A549 (cell line): ENCODE measurements at regions of chr11 and their contacts with region 1.

Region 1: DNA sequence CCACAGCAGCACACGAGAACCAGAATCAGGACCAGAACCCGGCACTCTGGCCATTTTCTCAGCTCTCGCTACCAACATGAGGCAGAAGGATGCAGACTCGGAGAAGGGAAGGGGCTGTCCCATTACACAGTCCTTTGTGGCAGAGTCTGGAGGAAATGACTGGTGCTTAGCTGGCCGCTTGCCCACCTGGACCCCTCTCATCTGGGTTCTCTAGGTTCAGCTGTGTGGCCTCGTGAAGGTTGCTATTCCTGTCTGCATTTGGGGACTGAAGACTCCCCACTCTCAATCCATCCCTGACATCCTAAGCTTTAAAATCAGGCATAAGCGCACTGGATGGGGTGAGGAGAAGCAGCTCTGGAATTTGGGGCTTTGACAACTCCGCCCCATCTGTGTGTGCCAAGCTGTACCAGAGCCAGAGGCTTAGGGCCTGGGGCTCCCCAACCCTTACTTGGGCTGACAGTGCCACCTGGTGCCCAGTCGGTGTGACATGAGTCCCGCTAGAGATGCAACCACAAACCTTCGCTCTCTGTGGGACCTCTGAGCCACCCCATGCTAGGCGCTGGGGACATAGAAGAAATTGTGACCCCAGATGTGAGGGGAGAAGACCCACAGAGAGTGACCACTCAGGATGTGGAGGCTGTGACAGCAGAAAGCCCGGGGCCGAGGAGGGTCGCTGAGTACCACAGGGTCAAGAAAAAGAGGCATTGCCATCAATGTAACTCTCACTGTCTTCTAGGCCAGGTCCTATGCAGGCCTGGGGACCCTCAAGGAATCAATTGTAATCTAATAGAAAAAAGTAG is 35.9 kb upstream of the FCHSD2 start:
- DNase-seq: peak; percentile 70 to 91
- ATAC-seq: peak; percentile 95 to 96
- H3K4me3 ChIP-seq: no peak overlapping the region
- H3K27ac ChIP-seq: no peak overlapping the region
- H3K4me1 ChIP-seq: no peaks in the 10 kb centered on the region
- CTCF ChIP-seq: peak; percentile 84
- EP300 ChIP-seq: no peak
- POLR2A ChIP-seq: no peak
- RAD21 ChIP-seq: peak; percentile 96 to 97

Region 2: GRCh38 chr11:72683782-72684200 is 494.2 kb before region 1 on chr11:
- CTCF ChIA-PET with region 1: interaction called, 28 read pairs
- POLR2A ChIA-PET with region 1: no interaction called
- DNase-seq: peak; percentile 42 to 85
- ATAC-seq: peak; percentile 57 to 85
- H3K4me3 ChIP-seq: no peak overlapping the region
- H3K27ac ChIP-seq: no peak overlapping the region
- H3K4me1 ChIP-seq: peaks cover 9% of the 10 kb centered on the region; the same call in 2 of the 3 replicates
- CTCF ChIP-seq: peak; percentile 83
- EP300 ChIP-seq: no peak
- POLR2A ChIP-seq: no peak
- RAD21 ChIP-seq: peak; percentile 82 to 87

Region 3: GRCh38 chr11:72821883-72822799 is 355.8 kb before region 1 on chr11:
- CTCF ChIA-PET with region 1: interaction called, 339 read pairs
- POLR2A ChIA-PET with region 1: no interaction called
- DNase-seq: peak; percentile 91 to 94
- ATAC-seq: peak; percentile 70 to 91
- H3K4me3 ChIP-seq: peak overlapping the region; percentile 52
- H3K27ac ChIP-seq: peak overlapping the region; percentile 86 to 92
- H3K4me1 ChIP-seq: peaks cover 7% of the 10 kb centered on the region
- CTCF ChIP-seq: no peak
- EP300 ChIP-seq: no peak
- POLR2A ChIP-seq: peak; percentile 86
- RAD21 ChIP-seq: peak in 1 of 2 experiments; percentile 25; a peak in 1 of 5 replicates

Region 4: GRCh38 chr11:72924568-72925190 is 253.3 kb before region 1 on chr11:
- CTCF ChIA-PET with region 1: interaction called, 25 read pairs
- POLR2A ChIA-PET with region 1: no interaction called
- DNase-seq: peak; percentile 11 to 43
- ATAC-seq: peak; percentile 24 to 55; a peak in 2 of 6 replicates
- H3K4me3 ChIP-seq: no peak overlapping the region
- H3K27ac ChIP-seq: no peak overlapping the region
- H3K4me1 ChIP-seq: no peaks in the 10 kb centered on the region
- CTCF ChIP-seq: peak; percentile 56
- EP300 ChIP-seq: no peak
- POLR2A ChIP-seq: no peak
- RAD21 ChIP-seq: peak; percentile 54 to 64

Region 5: GRCh38 chr11:73152861-73153483 is 25.0 kb before region 1 on chr11:
- CTCF ChIA-PET with region 1: interaction called, 20 read pairs
- POLR2A ChIA-PET with region 1: no interaction called
- DNase-seq: no peak
- ATAC-seq: no peak
- H3K4me3 ChIP-seq: no peak overlapping the region
- H3K27ac ChIP-seq: no peak overlapping the region
- H3K4me1 ChIP-seq: no peaks in the 10 kb centered on the region
- CTCF ChIP-seq: no peak
- EP300 ChIP-seq: no peak
- POLR2A ChIP-seq: no peak
- RAD21 ChIP-seq: no peak

Region 6: DNA sequence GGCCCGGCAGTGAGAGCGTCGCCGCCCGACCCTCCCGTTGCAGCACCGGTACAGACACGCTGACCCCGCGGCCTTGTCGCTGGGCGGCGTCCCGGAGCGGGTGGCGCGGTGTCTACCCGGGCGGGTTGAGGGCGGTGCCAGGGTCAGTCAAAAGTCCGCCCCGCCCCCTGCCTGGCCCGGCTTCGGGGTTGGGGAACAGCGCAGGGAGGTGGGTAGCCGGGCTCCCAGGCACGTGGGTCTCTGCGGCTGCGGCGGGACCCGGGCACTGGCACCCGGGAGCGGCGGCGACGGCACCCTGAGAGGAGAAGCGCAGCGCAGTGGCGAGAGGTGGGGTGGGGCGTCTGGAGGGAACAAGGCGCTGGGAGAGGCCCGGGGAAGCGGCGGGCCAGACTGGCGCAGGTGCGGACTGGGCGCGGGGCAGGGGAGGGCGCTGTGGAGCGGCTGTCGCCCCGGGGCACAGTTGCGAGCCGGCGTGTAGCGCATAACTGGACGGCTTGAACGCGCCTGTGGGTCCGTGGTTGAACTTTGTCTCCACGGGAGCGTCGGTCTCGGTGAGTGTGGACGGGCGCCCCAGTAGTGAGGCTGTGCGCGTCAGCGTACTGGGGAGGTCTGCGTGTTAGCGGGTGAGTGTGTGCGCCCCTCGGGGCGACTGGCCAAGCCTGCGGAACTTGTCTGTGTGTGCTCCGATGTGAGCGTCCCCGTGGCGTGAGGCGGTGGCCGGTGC is 40.3 kb after region 1 on chr11 and contains the start of gene P2RY2:
- CTCF ChIA-PET with region 1: interaction called, 21 read pairs
- POLR2A ChIA-PET with region 1: no interaction called
- DNase-seq: peak; percentile 72 to 82
- ATAC-seq: peak; percentile 90 to 94
- H3K4me3 ChIP-seq: peak within 1 kb of the TSS; percentile 43
- H3K27ac ChIP-seq: peak within 1 kb of the TSS; percentile 68 to 91
- H3K4me1 ChIP-seq: peaks cover 16% of the 10 kb centered on the region
- CTCF ChIP-seq: peak; percentile 74
- EP300 ChIP-seq: no peak
- POLR2A ChIP-seq: peak; percentile 79
- RAD21 ChIP-seq: peak in 1 of 2 experiments; percentile 31; a peak in 3 of 5 replicates
- polyA plus RNA-seq, gene P2RY2: 3.7 and 5.2 TPM in 2 replicates

Region 7: DNA sequence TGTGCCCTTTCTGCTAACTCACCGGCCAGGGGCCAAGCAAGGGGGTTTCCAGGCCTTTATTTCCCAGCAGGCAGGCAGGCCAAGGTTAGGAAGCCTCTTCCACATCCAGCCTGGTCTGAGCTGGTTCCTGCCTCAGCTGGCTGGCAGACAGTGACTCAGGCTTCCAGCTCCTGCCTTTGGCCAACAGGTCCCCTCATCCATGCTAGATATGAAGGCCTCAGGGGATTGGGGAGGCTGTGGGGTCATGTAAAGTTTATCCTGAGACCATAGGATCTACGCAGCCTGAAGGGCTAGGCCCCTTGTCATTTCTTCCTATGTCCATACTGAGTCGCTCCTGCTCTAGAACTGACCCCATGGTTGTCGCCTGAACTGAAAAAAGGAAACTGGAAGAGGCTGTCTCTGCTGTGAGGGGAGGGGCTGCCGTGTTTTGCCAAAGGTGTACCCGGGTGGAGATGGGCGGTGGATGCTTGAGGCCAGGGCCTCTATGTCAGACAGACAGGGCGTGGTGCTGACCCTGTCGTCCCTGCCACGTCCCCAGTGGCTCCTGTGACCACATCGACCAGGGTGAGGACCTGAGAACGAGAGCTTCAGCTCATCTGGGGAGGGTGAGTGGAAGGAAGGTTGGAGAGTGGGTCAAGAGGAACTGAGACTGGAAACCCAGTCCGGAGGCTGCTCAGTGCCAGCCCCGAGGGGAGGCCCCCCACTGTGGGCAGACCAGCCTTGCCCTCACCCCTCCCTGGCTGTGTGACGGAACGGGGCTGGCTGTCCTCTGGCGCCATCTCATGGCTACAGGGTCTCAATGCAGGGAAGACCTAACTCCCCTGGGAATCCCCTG is 111.1 kb after region 1 on chr11:
- CTCF ChIA-PET with region 1: interaction called, 179 read pairs
- POLR2A ChIA-PET with region 1: no interaction called
- DNase-seq: peak; percentile 86 to 91
- ATAC-seq: peak; percentile 72 to 84
- H3K4me3 ChIP-seq: peak overlapping the region; percentile 20; the same call in 1 of the 3 replicates
- H3K27ac ChIP-seq: peak overlapping the region; percentile 80 to 90
- H3K4me1 ChIP-seq: peaks cover 36% of the 10 kb centered on the region
- CTCF ChIP-seq: peak; percentile 96
- EP300 ChIP-seq: no peak
- POLR2A ChIP-seq: no peak
- RAD21 ChIP-seq: peak; percentile 98